Cardiac septum (tissue), 1 donor: ENCODE measurements at regions of chr10 and their contacts with region 1.

Region 1: GRCh38 chr10:84613336-84614021 is 285.1 kb downstream of the CCSER2 start:
- DNase-seq: no peak

Region 2: DNA sequence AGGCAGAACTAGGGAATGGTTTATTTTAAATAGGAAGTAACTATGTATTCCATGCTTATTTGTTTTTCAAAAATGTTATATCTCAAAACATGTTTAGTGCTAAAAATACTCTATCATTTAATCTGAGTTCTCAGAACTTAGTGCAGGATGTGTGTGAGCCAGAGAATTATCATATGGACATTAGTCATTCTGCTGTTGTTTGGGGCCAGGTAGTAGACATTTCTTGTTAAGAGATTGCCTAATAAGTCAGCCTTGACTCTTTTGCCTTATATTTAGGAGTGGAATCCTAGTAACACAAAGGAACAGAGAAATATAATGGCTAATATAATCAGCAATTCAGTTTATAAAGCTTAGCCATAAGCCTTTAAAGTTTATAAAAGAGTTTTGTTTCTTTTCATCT is 135.3 kb before region 1 on chr10:
- intact Hi-C with region 1: no loop called
- DNase-seq: no peak

Region 3: DNA sequence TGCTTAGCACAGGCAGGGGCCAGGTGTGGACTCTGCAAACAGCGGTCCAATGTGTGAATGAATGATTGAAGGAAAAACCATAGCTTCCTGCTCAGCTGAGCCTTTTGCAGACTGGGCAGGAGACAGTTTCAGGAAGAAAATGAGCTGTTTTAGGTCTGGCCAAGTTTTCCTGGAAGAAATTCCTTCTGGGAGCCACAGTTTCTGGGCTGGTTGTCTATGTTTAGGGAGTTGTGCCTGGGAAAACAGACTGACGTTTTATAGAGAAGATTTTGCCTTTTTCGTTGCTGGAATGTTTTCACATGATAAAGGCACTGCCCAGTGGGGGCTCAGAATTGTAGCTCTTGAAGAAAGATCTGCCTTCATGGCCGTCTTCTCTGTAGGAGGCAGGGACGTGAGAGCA is 30.0 kb before region 1 on chr10:
- intact Hi-C with region 1: no loop called
- DNase-seq: no peak

Region 4: GRCh38 chr10:84743483-84743882 is 130.0 kb after region 1 on chr10:
- intact Hi-C with region 1: loop called (anchors 10 kb)
- DNase-seq: no peak

Region 5: DNA sequence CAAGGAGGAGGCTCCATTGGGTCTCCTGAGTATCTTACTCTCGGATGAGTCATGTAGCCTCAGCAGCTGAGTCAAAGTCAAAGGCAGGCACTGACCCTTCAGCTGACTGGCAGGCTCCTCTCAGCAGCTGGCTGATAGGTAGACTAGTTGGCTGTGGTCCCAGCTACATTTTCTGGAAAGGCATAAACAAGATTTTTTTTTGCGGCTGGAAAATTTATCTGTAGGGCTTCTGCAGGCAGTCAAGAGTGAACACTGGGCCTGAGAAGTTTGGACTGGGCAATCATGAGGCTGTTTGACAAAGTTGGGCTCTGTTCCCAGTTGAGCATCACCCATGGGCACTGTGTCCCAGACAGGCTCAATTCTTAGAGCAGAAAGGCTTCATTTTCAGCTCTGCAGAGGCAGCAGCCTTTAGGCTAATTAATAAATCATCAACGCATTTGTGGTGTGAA is 511.1 kb after region 1 on chr10:
- intact Hi-C with region 1: no loop called
- DNase-seq: peak; percentile 81